GM13977 (cell line): ENCODE measurements at regions of chr4 and their contacts with region 1.

Region 1: GRCh38 chr4:86895692-86896488 is 3.7 kb upstream of the C4orf36 start:
- DNase-seq: peak; percentile 68
- CTCF ChIP-seq: peak; percentile 68

Region 2: GRCh38 chr4:86497980-86498862 is 397.7 kb before region 1 on chr4:
- in situ Hi-C with region 1: loop called (anchors 10 kb)
- DNase-seq: peak; percentile 22
- CTCF ChIP-seq: peak; percentile 82

Region 3: GRCh38 chr4:86657910-86658309 is 238.0 kb before region 1 on chr4:
- in situ Hi-C with region 1: no loop called
- DNase-seq: peak; percentile 16
- CTCF ChIP-seq: no peak